Heart left ventricle (tissue), 16 donors: ENCODE measurements at regions of chr17 and their contacts with region 1.

Region 1: GRCh38 chr17:78497115-78497540 is 80.1 kb downstream of the DNAH17 start:
- DNase-seq: peak; percentile 76 to 82 (median 78)
- ATAC-seq: peak; percentile 73 to 91 (median 82)
- H3K4me3 ChIP-seq: no peak overlapping the region
- H3K27ac ChIP-seq: no peak overlapping the region
- H3K4me1 ChIP-seq: peaks cover 0 to 13% (median 3%) of the 10 kb centered on the region in 12 donors
- H3K27me3 ChIP-seq: no peaks in the 10 kb centered on the region
- CTCF ChIP-seq: peak; percentile 59 to 84 (median 77)
- POLR2A ChIP-seq: no peak

Region 2: DNA sequence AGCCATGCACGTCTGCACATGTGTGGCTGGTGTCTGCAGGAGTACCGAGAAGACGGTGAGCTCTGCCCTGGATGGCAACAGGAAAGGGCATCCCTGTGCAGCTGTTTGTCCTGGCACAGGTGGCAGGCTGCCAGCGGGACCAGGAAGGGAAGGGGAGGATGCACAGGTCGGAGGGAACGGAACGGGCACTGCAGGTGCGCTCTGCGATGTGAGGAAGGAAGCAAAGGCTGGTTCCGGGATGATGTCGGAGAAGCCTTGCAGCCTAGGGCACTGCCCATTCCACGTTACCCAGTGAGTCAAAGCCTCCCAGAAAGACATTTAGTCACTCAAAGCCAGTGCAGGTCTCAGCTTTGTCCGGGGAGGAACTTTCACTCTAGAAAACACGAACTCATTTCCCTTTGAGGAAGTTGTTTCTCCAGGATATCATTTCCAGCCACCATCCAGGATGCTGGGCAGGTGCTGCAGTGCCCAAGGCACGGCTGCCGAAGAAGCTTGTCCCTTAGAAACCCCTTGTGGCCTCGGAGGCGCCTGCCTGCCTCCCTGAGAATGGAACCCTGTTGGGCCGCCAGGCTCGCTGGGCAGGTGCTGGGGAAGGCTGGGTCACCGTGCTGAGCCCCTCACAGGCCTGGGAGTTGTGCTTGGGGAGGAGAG is 270.3 kb before region 1 on chr17:
- intact Hi-C with region 1: no loop called
- DNase-seq: no peak
- ATAC-seq: no peak
- H3K4me3 ChIP-seq: no peak overlapping the region
- H3K27ac ChIP-seq: no peak overlapping the region
- H3K4me1 ChIP-seq: peaks cover 0 to 12% (median 4%) of the 10 kb centered on the region in 12 donors
- H3K27me3 ChIP-seq: peaks cover 11 to 22% (median 16%) of the 10 kb centered on the region in 9 donors
- CTCF ChIP-seq: no peak
- POLR2A ChIP-seq: no peak

Region 3: GRCh38 chr17:78365561-78366108 is 131.5 kb before region 1 on chr17:
- intact Hi-C with region 1: no loop called
- DNase-seq: peak in 1 of 5 donors; percentile 20
- ATAC-seq: peak in 3 of 4 donors; percentile 3 to 30 (median 16)
- H3K4me3 ChIP-seq: no peak overlapping the region
- H3K27ac ChIP-seq: peak overlapping the region in 10 of 12 donors; percentile 44 to 75 (median 64)
- H3K4me1 ChIP-seq: peaks cover 0 to 30% (median 13%) of the 10 kb centered on the region in 12 donors
- H3K27me3 ChIP-seq: no peaks in the 10 kb centered on the region
- CTCF ChIP-seq: no peak
- POLR2A ChIP-seq: no peak

Region 4: DNA sequence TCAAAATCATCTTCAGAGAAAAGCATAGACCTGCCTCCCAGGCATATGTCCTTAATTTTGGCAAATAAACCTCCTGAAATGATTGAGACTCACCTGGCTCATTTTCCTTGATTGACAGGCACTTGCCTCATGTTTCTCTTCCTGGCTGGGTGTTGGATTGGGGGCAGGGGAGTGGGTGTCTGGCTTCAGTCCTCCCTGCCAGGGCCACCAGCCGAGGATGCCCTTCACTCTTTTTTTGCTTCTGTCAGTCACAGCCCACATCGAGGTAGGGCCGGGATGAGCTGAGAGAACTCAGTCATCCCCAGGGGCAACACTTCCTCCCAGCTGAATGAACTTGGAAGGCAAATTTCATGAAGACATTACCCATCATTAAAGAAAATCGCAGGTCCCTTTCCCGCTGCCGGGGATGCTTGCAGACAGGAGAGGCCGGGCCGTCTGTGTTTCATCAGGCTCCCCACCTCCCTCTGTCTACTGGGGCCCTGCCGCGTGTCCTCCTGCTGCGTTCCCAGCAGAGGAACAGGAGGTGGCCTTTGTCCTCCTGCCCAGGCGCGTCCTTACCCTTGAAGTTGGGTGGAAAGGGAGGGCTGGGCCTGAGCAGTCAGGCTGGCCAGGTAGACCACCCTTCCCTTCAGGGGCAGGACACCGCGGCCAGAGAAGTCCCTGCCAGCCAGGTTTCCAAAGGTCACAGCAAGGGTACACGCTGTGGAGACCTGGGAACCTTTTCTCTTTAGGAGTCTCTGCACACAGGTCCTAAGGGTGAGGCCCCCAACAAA is 91.3 kb after region 1 on chr17:
- intact Hi-C with region 1: loop called in 1 of 10 experiments (anchors 5 kb)
- DNase-seq: peak in 2 of 5 donors; percentile 31 to 41
- ATAC-seq: no peak
- H3K4me3 ChIP-seq: no peak overlapping the region
- H3K27ac ChIP-seq: no peak overlapping the region
- H3K4me1 ChIP-seq: peaks cover 0 to 30% (median 11%) of the 10 kb centered on the region in 12 donors
- H3K27me3 ChIP-seq: peaks cover 0 to 11% (median 0%) of the 10 kb centered on the region in 9 donors
- CTCF ChIP-seq: no peak
- POLR2A ChIP-seq: no peak

Region 5: GRCh38 chr17:78605429-78605828 is 108.3 kb after region 1 on chr17:
- intact Hi-C with region 1: loop called in 4 of 10 experiments (anchors 2 to 10 kb)
- DNase-seq: no peak
- ATAC-seq: no peak
- H3K4me3 ChIP-seq: no peak overlapping the region
- H3K27ac ChIP-seq: no peak overlapping the region
- H3K4me1 ChIP-seq: peaks cover 0 to 8% (median 1%) of the 10 kb centered on the region in 12 donors
- H3K27me3 ChIP-seq: no peaks in the 10 kb centered on the region
- CTCF ChIP-seq: no peak
- POLR2A ChIP-seq: no peak

Region 6: DNA sequence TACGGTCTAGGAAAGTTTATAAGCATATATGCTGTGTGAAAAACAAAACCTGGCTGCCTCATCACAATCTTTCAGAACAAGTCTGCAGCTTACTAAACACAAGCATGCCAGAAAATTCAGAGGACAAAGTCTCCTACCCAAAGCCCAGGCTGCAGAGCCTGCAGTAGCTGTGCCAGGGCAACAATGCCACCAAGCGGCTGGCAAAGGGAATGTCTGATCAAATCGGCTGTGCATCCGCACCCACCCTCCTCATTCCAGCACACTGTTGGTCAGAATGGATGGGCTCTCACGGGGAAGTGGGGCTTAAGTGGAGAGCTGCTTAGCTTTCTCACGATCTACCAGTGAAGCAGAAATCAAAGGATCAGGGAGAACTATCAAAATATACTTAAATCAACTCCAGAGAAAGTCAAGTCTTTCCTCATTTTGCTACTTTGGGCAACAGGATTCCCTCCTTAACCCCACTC is 211.4 kb after region 1 on chr17:
- intact Hi-C with region 1: loop called in 9 of 10 experiments (anchors 1 to 5 kb)
- DNase-seq: peak; percentile 68 to 81 (median 74)
- ATAC-seq: peak; percentile 58 to 92 (median 85)
- H3K4me3 ChIP-seq: no peak overlapping the region
- H3K27ac ChIP-seq: peak overlapping the region in 1 of 12 donors; percentile 50
- H3K4me1 ChIP-seq: peaks cover 0 to 48% (median 27%) of the 10 kb centered on the region in 12 donors
- H3K27me3 ChIP-seq: no peaks in the 10 kb centered on the region
- CTCF ChIP-seq: peak; percentile 68 to 94 (median 82)
- POLR2A ChIP-seq: no peak

Region 7: GRCh38 chr17:78798695-78799559 is 301.8 kb after region 1 on chr17:
- intact Hi-C with region 1: loop called (anchors 1 to 5 kb)
- DNase-seq: no peak
- ATAC-seq: peak in 2 of 4 donors; percentile 20 to 31
- H3K4me3 ChIP-seq: no peak overlapping the region
- H3K27ac ChIP-seq: no peak overlapping the region
- H3K4me1 ChIP-seq: peaks cover 0 to 37% (median 11%) of the 10 kb centered on the region in 12 donors
- H3K27me3 ChIP-seq: no peaks in the 10 kb centered on the region
- CTCF ChIP-seq: peak; percentile 22 to 63 (median 47)
- POLR2A ChIP-seq: no peak